ENCODE measurements at regions of chr4 and their contacts with region 1.

Region 1: GRCh38 chr4:124262211-124263179 is 450.0 kb downstream of the ANKRD50 start:
- H3K4me3 Mint-ChIP-seq: no peak overlapping the region
- H3K27ac Mint-ChIP-seq: no peak overlapping the region
- H3K4me1 Mint-ChIP-seq: no peaks in the 10 kb centered on the region
- H3K27me3 Mint-ChIP-seq: no peaks in the 10 kb centered on the region

Region 2: DNA sequence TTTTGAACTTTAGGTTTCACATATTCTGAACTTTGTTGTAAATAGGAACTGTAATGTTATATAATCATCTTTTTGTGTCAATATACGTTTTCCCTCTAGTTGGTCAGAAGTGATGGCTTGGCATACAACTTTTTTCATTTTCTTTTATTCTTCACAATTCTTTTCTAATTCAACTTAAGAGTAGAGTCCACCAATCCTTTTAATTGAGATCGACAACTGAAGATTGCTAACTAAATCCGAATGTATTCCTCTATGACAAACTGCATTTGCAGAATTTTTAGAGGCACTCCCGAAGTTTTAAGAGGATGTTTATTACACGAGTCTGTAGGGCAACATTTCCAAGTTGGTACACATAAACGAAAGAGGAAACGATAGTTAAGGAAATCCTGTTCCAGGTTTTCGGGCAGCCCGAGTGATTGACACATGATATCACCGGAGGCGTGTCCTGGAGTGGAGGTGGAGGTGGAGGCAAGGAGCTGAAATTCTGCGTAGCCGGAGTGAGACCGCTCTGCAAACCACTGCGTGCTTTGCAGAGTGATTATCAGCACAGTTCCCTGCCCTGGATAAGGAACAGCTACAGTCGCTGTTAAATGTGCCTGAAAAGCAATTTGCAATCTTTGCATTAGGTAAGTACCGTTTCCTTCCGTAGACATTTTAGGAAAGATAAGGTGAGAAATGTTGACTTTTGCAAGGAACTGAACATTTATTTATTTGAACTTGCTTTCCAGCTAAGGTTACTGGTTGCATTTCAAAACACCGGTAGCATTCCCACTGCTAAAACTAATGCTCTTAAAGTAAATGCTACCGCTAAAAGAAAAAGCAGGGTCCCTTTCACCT is 866.0 kb before region 1 on chr4 and contains the start of gene SPRY1:
- intact Hi-C with region 1: loop called (anchors 10 kb)
- H3K4me3 Mint-ChIP-seq: peak within 1 kb of the TSS; percentile 73
- H3K27ac Mint-ChIP-seq: peak within 1 kb of the TSS; percentile 57
- H3K4me1 Mint-ChIP-seq: peaks cover 23% of the 10 kb centered on the region
- H3K27me3 Mint-ChIP-seq: peaks cover 41% of the 10 kb centered on the region

Region 3: GRCh38 chr4:123776254-123776653 is 486.2 kb before region 1 on chr4:
- intact Hi-C with region 1: loop called (anchors 2 kb)
- H3K4me3 Mint-ChIP-seq: no peak overlapping the region
- H3K27ac Mint-ChIP-seq: peak overlapping the region; percentile 1
- H3K4me1 Mint-ChIP-seq: peaks cover 14% of the 10 kb centered on the region
- H3K27me3 Mint-ChIP-seq: no peaks in the 10 kb centered on the region

Region 4: GRCh38 chr4:124596816-124597215 is 334.3 kb after region 1 on chr4:
- intact Hi-C with region 1: no loop called
- H3K4me3 Mint-ChIP-seq: no peak overlapping the region
- H3K27ac Mint-ChIP-seq: no peak overlapping the region
- H3K4me1 Mint-ChIP-seq: peaks cover 15% of the 10 kb centered on the region
- H3K27me3 Mint-ChIP-seq: peaks cover 2% of the 10 kb centered on the region

Measured in dendritic cell treated with granulocyte-macrophage colony-stimulating factor and Interleukin-4, amounts not matched to agents 40 ng/mL and 50 ng/mL, for 4 days (primary cell).